Heart left ventricle (tissue), 16 donors: ENCODE measurements at regions of chr18 and their contacts with region 1.

Region 1: DNA sequence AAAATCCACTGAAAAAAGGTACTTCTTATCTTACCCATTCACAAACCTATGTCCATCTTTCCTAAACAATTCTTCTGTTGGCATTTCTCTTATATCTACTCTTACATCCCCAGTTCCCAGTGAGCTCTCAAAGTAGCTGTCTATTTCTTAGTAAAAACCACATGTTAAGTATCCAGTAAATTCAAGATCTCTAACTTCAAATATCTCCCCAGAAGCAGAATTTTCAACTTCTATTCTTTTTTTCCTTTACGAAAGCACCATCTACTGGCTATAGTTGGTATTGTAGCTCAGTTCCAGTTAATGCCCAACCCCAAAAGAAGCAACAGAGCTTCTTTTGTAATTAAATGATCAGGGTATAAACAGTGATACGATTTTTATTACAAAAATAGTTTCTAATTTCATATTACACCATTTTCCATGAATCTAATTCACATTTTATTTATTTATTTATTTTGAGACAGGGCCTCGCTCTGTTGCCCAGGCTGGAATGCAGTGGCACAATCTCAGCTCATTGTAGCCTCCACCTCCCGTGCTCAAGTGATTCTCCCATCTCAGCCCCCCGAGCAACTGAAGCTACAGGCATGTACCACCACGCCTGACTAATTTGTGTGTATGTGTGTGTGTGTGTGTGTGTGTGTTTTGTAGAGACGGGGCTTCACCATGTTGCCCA is 28.5 kb downstream of the HRH4 start:
- DNase-seq: no peak
- ATAC-seq: peak in 1 of 4 donors; percentile 61
- H3K4me3 ChIP-seq: no peak overlapping the region
- H3K27ac ChIP-seq: no peak overlapping the region
- H3K4me1 ChIP-seq: peaks cover 0 to 6% (median 0%) of the 10 kb centered on the region in 12 donors
- H3K27me3 ChIP-seq: no peaks in the 10 kb centered on the region
- CTCF ChIP-seq: peak; percentile 75 to 86 (median 83)
- POLR2A ChIP-seq: no peak

Region 2: DNA sequence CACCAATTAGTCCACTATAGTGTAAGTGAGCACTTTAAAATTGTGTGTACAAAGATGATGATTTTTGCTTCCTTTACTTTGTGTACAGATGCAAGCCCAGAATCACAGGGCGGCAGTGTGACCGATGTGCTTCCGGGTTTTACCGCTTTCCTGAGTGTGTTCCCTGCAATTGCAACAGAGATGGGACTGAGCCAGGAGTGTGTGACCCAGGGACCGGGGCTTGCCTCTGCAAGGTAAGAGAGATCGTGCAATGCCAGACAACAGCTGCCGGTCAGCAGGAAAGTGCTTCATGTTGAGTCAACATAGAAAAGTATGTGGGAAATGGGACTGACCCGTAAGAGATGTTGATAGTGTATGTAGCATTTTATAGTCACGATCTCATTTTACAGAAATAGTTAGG is 631.2 kb before region 1 on chr18:
- intact Hi-C with region 1: no loop called
- DNase-seq: no peak
- ATAC-seq: no peak
- H3K4me3 ChIP-seq: no peak overlapping the region
- H3K27ac ChIP-seq: no peak overlapping the region
- H3K4me1 ChIP-seq: peaks cover 0 to 15% (median 0%) of the 10 kb centered on the region in 12 donors
- H3K27me3 ChIP-seq: no peaks in the 10 kb centered on the region
- CTCF ChIP-seq: no peak
- POLR2A ChIP-seq: no peak

Region 3: DNA sequence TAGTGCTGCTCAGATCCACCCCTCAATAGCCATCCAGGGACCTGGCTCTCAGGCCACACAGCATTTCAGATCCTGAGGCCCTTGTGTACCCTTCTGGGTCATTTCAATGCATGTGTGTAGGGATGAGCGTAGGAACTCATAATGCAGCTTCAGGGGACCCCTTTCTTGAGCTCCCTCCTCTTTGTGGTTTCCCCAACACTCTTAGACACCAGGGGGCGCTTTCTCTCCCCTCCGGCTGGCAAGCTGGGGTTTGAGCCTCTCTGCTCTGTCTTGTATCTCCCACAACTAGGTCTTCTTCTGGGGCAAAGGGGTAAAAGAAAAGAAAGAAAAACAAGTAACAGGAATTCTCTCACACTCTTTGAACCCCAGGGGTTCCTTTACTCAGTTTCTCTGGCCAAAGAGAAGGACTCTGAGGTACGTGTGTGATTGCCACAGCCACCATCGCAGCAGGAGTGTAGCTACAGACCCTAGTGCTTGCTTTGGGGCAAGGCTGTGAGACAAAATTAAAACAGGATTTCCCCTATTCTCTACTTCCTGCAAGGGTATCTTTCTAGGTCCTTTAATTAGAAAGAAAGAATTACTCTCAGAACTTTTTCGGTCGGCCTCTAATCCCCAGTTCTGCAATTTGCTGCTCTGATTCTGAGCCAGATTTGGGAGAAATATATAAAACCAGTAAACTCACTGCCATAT is 312.1 kb before region 1 on chr18:
- intact Hi-C with region 1: loop called in 5 of 10 experiments (anchors 5 to 10 kb)
- DNase-seq: peak in 4 of 5 donors; percentile 56 to 70 (median 61)
- ATAC-seq: peak in 3 of 4 donors; percentile 72 to 85 (median 79)
- H3K4me3 ChIP-seq: no peak overlapping the region
- H3K27ac ChIP-seq: no peak overlapping the region
- H3K4me1 ChIP-seq: peaks cover 0 to 9% (median 3%) of the 10 kb centered on the region in 12 donors
- H3K27me3 ChIP-seq: no peaks in the 10 kb centered on the region
- CTCF ChIP-seq: peak; percentile 65 to 88 (median 74)
- POLR2A ChIP-seq: no peak

Region 4: GRCh38 chr18:24293254-24293653 is 195.7 kb before region 1 on chr18:
- intact Hi-C with region 1: no loop called
- DNase-seq: no peak
- ATAC-seq: no peak
- H3K4me3 ChIP-seq: no peak overlapping the region
- H3K27ac ChIP-seq: no peak overlapping the region
- H3K4me1 ChIP-seq: no peaks in the 10 kb centered on the region
- H3K27me3 ChIP-seq: no peaks in the 10 kb centered on the region
- CTCF ChIP-seq: no peak
- POLR2A ChIP-seq: no peak

Region 5: DNA sequence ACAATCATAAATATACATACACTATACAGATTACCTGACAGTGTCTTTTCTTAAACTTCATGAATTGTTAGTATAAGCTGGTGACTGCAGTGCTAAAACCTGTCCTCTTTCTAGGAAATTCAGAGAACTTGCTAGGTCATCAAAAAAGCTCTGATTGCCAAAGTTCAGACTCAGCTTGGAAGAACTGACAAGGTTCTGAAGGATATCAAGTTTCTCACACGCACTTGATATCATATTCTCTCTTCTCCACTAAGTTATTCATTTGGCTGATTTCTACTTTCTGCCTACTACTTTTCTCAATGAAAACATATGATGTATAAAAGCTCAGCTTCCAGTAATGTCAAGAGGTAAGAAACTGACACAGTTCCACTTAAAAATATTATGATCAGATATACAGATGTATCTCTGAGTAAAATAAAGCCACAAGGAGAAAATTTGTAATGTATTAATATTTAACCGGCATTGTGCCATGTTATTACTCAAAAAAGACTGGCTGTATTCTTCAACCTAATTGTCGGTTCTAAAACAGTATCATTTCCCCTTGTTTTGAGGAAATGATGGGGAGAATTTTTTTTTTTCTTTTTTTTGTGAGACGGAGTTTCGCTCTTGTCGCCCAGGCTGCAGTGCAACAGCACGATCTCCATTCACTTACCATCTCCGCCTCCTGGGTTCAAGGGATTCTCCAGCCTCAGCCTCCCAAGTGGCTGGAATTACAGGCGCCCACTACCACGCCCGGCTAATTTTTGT is 93.7 kb before region 1 on chr18:
- intact Hi-C with region 1: no loop called
- DNase-seq: no peak
- ATAC-seq: no peak
- H3K4me3 ChIP-seq: peak overlapping the region in 1 of 12 donors; percentile 33
- H3K27ac ChIP-seq: peak overlapping the region in 1 of 12 donors; percentile 33
- H3K4me1 ChIP-seq: peaks cover 0 to 20% (median 6%) of the 10 kb centered on the region in 12 donors
- H3K27me3 ChIP-seq: no peaks in the 10 kb centered on the region
- CTCF ChIP-seq: no peak
- POLR2A ChIP-seq: no peak